MCF 10A (cell line): ENCODE measurements at regions of chr9 and their contacts with region 1.

Region 1: DNA sequence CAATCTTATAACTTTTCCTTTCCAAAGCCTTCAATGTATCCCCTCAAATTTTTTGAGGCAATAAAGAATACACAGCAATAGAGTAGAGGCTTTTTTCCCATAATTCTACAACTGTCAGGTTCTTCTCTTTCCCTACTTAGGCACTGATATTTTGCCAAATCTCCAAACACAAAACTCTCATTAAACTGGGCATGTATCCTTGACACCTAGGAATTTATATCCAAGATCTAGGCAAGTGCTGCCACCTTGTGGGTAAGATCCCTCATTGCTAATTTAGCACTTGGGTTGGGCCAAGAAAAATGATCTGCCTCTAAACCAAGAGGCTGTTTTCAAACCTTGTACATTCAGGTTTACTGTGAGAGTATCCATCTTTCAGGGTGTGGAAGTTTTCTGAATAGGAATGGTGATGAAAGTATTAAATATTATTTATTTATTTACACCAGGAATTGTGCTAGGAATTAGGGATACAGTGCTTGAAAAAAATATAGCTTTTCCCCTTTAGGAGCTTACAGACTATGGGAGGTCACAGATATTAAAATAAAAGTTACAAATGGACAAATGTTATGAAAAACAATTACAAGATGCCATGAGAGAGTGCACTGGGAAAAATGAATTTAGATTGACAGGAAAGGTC is 17.6 kb downstream of the TSTD2 start:
- DNase-seq: peak; percentile 71
- H3K4me3 Mint-ChIP-seq: no peak overlapping the region
- H3K27ac Mint-ChIP-seq: no peak overlapping the region
- H3K4me1 Mint-ChIP-seq: peaks cover 7% of the 10 kb centered on the region
- H3K27me3 Mint-ChIP-seq: no peaks in the 10 kb centered on the region
- CTCF ChIP-seq: peak; percentile 54

Region 2: DNA sequence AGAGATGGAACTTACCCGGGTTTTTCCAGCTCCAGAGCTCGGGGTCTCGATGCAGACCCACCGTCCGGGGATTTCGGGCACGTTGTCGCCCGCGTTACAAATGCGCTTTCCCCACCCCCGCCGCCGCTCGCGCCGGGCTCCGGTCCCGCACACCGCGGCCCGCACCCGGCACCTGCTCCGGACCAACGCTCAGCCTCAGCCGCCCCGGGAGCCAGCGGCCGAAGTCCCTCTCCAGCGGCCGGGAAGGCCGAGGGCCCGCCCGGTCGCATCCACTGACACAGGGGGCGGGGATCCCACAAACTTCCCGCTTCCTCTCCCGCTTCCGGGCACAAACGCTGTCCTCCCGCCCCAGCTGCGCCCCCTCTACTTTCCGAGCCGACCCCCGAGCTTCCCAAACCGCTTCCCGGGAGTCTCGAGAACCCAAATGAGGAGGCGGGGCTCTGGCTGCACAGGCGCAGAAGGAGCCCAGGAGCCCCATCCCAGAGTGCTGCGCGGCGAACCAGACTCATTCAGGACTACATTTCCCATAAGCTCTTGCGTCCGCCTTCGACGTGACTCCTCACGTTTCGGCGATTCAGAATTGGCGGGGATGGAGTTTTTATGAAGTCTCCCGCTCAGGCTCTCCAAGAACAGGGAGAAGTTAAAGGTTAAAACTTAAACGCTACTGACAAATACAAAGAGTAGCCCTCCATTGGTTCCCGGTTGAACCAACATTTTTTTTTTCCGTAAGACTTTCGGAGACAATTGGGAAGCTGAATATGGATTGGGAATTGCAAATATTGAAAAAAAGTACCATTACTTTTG is 761.3 kb before region 1 on chr9 and contains the start of gene ZNF782:
- CTCF ChIA-PET with region 1: interaction called, 5 read pairs
- POLR2A ChIA-PET with region 1: no interaction called
- intact Hi-C with region 1: loop called (anchors 5 kb)
- DNase-seq: peak; percentile 96
- H3K4me3 Mint-ChIP-seq: peak within 1 kb of the TSS; percentile 87
- H3K27ac Mint-ChIP-seq: peak within 1 kb of the TSS; percentile 94
- H3K4me1 Mint-ChIP-seq: peaks cover 25% of the 10 kb centered on the region
- H3K27me3 Mint-ChIP-seq: no peaks in the 10 kb centered on the region
- CTCF ChIP-seq: no peak
- total RNA-seq, gene ZNF782: 5.2 and 6.0 TPM in 2 replicates

Region 3: GRCh38 chr9:97411789-97412625 is 203.5 kb before region 1 on chr9 and contains the start of gene TDRD7:
- CTCF ChIA-PET with region 1: interaction called, 14 read pairs
- POLR2A ChIA-PET with region 1: interaction called, 4 read pairs
- intact Hi-C with region 1: loop called (anchors 2 kb)
- DNase-seq: peak; percentile 75
- H3K4me3 Mint-ChIP-seq: peak within 1 kb of the TSS; percentile 75
- H3K27ac Mint-ChIP-seq: peak within 1 kb of the TSS; percentile 81
- H3K4me1 Mint-ChIP-seq: peaks cover 12% of the 10 kb centered on the region
- H3K27me3 Mint-ChIP-seq: peaks cover 27% of the 10 kb centered on the region
- CTCF ChIP-seq: peak; percentile 96
- total RNA-seq, gene TDRD7: 7.1 and 8.2 TPM in 2 replicates

Region 4: GRCh38 chr9:97475059-97475458 is 140.5 kb before region 1 on chr9:
- CTCF ChIA-PET with region 1: interaction called, 369 read pairs
- POLR2A ChIA-PET with region 1: interaction called, 12 read pairs
- intact Hi-C with region 1: no loop called
- DNase-seq: no peak
- H3K4me3 Mint-ChIP-seq: no peak overlapping the region
- H3K27ac Mint-ChIP-seq: no peak overlapping the region
- H3K4me1 Mint-ChIP-seq: no peaks in the 10 kb centered on the region
- H3K27me3 Mint-ChIP-seq: no peaks in the 10 kb centered on the region
- CTCF ChIP-seq: no peak

Region 5: DNA sequence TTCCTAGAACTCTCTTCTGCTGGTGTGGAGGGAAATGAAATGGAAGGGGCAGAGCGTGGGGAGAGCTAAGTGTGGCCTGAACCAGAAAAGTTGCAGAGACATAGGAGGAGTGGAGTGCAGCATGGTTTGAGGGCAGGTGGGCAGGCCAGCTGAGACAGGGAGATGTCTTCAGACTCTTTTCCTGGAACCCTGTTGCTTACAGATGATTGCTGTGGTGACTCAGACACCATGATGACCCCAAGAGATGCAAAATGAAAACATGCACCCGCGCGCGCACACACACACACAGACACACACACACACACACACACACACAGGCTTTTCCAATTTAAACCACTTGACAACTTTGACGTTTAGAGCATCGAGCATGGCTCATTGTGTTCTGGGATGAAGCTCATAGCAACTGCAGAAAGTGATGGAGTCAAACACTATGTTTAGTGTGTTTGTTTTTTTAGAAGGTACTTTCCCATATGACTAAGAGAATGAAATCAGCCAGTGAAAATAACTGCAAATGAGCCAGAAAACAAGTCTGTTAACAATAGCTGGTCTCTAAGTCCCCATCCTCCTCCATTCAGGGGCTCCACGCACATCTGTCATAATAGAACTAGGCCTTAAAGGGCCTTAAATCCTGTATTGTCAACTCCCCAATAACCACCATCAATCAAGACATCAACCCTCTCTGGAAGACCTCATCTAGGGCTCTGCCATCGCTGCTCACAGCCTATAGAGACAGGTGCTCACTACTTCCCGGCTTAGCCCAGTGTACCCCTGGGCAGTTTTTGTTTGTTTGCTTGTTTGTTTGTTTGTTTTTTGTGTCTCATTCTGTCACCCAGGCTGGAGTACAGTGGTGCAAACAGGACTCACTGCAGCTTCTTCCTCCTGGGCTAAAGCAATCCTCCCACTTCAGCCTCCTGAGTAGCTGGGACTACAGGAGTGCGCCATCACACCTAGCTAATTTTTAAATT is 104.5 kb before region 1 on chr9:
- CTCF ChIA-PET with region 1: interaction called, 12 read pairs
- POLR2A ChIA-PET with region 1: no interaction called
- intact Hi-C with region 1: no loop called
- DNase-seq: peak; percentile 67
- H3K4me3 Mint-ChIP-seq: no peak overlapping the region
- H3K27ac Mint-ChIP-seq: peak overlapping the region; percentile 63
- H3K4me1 Mint-ChIP-seq: peaks cover 17% of the 10 kb centered on the region
- H3K27me3 Mint-ChIP-seq: peaks cover 5% of the 10 kb centered on the region
- CTCF ChIP-seq: no peak

Region 6: GRCh38 chr9:97689401-97689800 is 73.8 kb after region 1 on chr9:
- CTCF ChIA-PET with region 1: no interaction called
- POLR2A ChIA-PET with region 1: no interaction called
- intact Hi-C with region 1: no loop called
- DNase-seq: no peak
- H3K4me3 Mint-ChIP-seq: no peak overlapping the region
- H3K27ac Mint-ChIP-seq: no peak overlapping the region
- H3K4me1 Mint-ChIP-seq: peaks cover 18% of the 10 kb centered on the region
- H3K27me3 Mint-ChIP-seq: no peaks in the 10 kb centered on the region
- CTCF ChIP-seq: no peak

Region 7: GRCh38 chr9:97721396-97721795 is 105.8 kb after region 1 on chr9:
- CTCF ChIA-PET with region 1: no interaction called
- POLR2A ChIA-PET with region 1: no interaction called
- intact Hi-C with region 1: no loop called
- DNase-seq: no peak
- H3K4me3 Mint-ChIP-seq: no peak overlapping the region
- H3K27ac Mint-ChIP-seq: no peak overlapping the region
- H3K4me1 Mint-ChIP-seq: peaks cover 5% of the 10 kb centered on the region
- H3K27me3 Mint-ChIP-seq: no peaks in the 10 kb centered on the region
- CTCF ChIP-seq: no peak